ENCODE measurements at regions of chr6 and their contacts with region 1.

Region 1: DNA sequence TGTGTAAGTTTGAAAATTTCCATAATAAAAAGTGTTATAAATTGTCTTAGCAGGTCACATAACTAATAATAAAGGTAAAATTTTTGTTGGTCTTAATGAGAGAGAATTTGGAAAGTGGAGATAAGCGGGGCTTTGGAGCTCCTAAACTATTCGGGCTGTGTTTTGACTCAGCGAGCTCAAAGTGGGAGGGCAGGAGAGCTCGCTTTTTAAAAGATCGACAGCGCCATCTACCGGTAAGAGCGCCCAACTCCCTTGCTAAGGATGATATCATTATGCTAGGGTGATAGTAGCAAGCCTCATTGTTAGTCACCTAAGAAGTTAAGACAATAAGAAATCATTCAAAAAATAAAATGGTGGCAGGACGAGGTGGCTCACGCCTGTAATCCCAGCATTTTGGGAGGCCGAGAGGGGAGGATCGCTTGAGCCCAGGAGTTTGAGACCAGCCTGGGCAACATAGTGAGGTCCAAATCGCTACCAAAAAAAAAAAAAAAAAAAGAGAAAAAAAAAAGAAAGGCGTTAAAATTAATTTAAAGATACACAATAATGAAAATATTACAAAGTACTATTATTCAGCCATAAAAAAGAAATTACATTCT is 24.8 kb downstream of the C6orf15 start:
- DNase-seq: peak; percentile 72 to 90 (median 81)
- H3K4me3 ChIP-seq: no peak overlapping the region
- H3K4me3 Mint-ChIP-seq: no peak overlapping the region
- H3K27ac ChIP-seq: no peak overlapping the region
- H3K27ac Mint-ChIP-seq: no peak overlapping the region
- H3K4me1 ChIP-seq: peaks cover 5% of the 10 kb centered on the region
- H3K4me1 Mint-ChIP-seq: peaks cover 0 to 4% (median 2%) of the 10 kb centered on the region in 3 donors
- H3K27me3 ChIP-seq: no peaks in the 10 kb centered on the region
- H3K27me3 Mint-ChIP-seq: peaks cover 2 to 14% of the 10 kb centered on the region in 2 donors

Region 2: DNA sequence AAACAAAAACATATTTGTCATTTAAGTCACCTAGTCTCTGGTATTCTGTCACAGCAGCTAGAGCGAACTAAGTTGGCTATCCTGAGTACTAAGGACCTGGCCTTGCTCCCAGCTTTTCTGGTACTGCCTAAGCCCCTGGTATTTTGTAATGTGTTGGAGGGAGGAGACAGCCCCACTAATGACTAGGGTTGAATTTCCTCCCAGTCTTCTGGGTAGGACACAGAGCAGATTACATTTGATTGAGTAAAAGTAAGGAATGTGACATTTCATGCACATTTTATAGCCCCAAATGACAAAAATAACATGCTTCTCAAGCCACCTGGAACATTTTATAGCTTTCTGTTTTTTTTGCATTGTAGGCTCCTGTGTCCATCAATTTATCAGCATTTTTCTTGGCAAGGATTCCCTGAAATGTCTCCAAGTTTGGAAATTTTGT is 251.1 kb before region 1 on chr6:
- CTCF ChIA-PET with region 1: interaction called, 10 read pairs
- POLR2A ChIA-PET with region 1: no interaction called
- DNase-seq: no peak
- H3K4me3 ChIP-seq: no peak overlapping the region
- H3K4me3 Mint-ChIP-seq: no peak overlapping the region
- H3K27ac ChIP-seq: no peak overlapping the region
- H3K27ac Mint-ChIP-seq: no peak overlapping the region
- H3K4me1 ChIP-seq: peaks cover 19% of the 10 kb centered on the region
- H3K4me1 Mint-ChIP-seq: peaks cover 23 to 36% (median 23%) of the 10 kb centered on the region in 3 donors
- H3K27me3 ChIP-seq: no peaks in the 10 kb centered on the region
- H3K27me3 Mint-ChIP-seq: peaks cover 0 to 1% of the 10 kb centered on the region in 2 donors

Measured in CD8-positive, alpha-beta memory T cell (primary cell).